ENCODE measurements at regions of chr7 and their contacts with region 1.

Region 1: GRCh38 chr7:104529567-104529966 is 201.2 kb downstream of the LHFPL3 start:
- DNase-seq: no peak

Region 2: GRCh38 chr7:104442481-104442880 is 87.1 kb before region 1 on chr7:
- intact Hi-C with region 1: loop called (anchors 5 kb)
- DNase-seq: peak in 2 of 10 donors; percentile 14 to 23

Region 3: GRCh38 chr7:104627516-104627915 is 97.9 kb after region 1 on chr7:
- intact Hi-C with region 1: no loop called
- DNase-seq: no peak